ENCODE measurements at regions of chr1 and their contacts with region 1.

Region 1: GRCh38 chr1:215710036-215710898 is 143.2 kb downstream of the KCTD3 start:
- DNase-seq: no peak
- H3K4me3 ChIP-seq: no peak overlapping the region
- H3K27ac ChIP-seq: no peak overlapping the region
- H3K4me1 ChIP-seq: no peaks in the 10 kb centered on the region
- H3K27me3 ChIP-seq: no peaks in the 10 kb centered on the region
- CTCF ChIP-seq: peak; percentile 67

Region 2: GRCh38 chr1:216119602-216120001 is 409.3 kb after region 1 on chr1:
- CTCF ChIA-PET with region 1: interaction called, 10 read pairs
- POLR2A ChIA-PET with region 1: no interaction called
- intact Hi-C with region 1: no loop called
- DNase-seq: no peak
- H3K4me3 ChIP-seq: no peak overlapping the region
- H3K27ac ChIP-seq: no peak overlapping the region
- H3K4me1 ChIP-seq: no peaks in the 10 kb centered on the region
- H3K27me3 ChIP-seq: no peaks in the 10 kb centered on the region
- CTCF ChIP-seq: peak; percentile 55; the same call in 1 of the 2 replicates

Measured in PC-9 (cell line).